ENCODE measurements at regions of chr17 and their contacts with region 1.

Region 1: GRCh38 chr17:19377602-19378392 is 501 bp upstream of the MAPK7 start:
- DNase-seq: peak; percentile 97 to 100
- H3K4me3 ChIP-seq: peak overlapping the region; percentile 79
- H3K27ac ChIP-seq: peak overlapping the region; percentile 79
- H3K4me1 ChIP-seq: peaks cover 19% of the 10 kb centered on the region
- H3K27me3 ChIP-seq: no peaks in the 10 kb centered on the region
- CTCF ChIP-seq: 0 out of 2 replicates have a peak, but pooled peaks have one; percentile 21

Region 2: DNA sequence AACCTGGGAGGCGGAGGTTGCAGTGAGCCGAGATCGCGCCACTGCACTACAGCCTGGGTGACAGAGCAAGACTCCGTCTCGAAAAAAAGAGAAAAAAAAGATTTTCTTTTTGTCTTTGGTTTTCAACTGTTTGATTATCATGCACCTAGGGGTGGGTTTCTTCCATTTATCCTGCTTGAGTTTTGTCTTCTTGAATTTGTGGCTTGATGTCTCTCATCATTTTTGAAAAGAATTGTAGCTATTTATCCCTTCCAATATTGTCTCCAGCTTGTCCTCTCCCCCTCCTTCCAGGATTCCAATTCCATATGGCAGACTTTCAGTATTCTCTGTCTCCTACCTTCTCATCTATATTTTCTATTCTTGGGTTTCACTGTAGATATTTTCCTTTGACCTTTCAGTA is 23.0 kb before region 1 on chr17:
- CTCF ChIA-PET with region 1: no interaction called
- POLR2A ChIA-PET with region 1: interaction called, 10 read pairs
- intact Hi-C with region 1: no loop called
- DNase-seq: no peak
- H3K4me3 ChIP-seq: no peak overlapping the region
- H3K27ac ChIP-seq: no peak overlapping the region
- H3K4me1 ChIP-seq: peaks cover 9% of the 10 kb centered on the region
- H3K27me3 ChIP-seq: no peaks in the 10 kb centered on the region
- CTCF ChIP-seq: no peak

Region 3: GRCh38 chr17:19492141-19492540 is 114.3 kb after region 1 on chr17:
- CTCF ChIA-PET with region 1: interaction called, 3 read pairs
- POLR2A ChIA-PET with region 1: interaction called, 11 read pairs
- intact Hi-C with region 1: no loop called
- DNase-seq: no peak
- H3K4me3 ChIP-seq: no peak overlapping the region
- H3K27ac ChIP-seq: no peak overlapping the region
- H3K4me1 ChIP-seq: no peaks in the 10 kb centered on the region
- H3K27me3 ChIP-seq: no peaks in the 10 kb centered on the region
- CTCF ChIP-seq: no peak

Region 4: DNA sequence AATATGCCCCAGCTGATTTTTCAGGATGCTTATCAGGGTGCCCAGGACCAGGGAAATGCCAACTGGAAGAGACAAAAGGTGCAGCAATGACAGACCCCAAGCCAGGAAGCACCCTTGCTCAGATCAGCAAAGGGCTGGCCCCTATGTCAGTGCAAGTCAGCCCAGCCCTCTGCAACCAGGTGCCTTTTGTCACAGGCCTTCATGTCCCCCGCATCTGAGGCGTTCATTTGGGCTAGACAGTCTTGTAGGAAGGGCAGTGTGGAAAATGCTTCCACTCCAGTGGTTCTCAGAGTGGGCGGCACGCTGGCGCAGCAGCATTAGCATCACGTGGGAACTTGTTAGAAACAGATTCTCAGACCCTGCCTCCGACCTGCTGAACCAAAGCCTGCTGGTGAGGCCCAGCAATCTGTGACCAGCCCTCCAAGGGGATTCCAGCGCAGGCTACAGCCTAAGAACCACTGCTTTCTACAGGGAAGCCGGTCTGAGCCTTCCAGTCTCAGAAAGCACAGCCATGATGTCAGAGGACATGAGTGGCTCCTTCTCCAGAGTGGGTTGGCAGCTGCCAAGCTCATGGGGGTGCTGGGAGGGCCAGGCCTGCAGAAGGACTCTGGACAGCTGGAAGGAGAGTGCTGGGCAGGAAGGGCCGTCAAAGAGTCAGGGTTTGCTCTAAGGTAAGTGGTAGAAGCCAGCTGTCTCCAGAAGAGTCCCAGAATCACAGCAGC is 325.5 kb after region 1 on chr17:
- CTCF ChIA-PET with region 1: no interaction called
- POLR2A ChIA-PET with region 1: interaction called, 18 read pairs
- intact Hi-C with region 1: no loop called
- DNase-seq: no peak
- H3K4me3 ChIP-seq: no peak overlapping the region
- H3K27ac ChIP-seq: no peak overlapping the region
- H3K4me1 ChIP-seq: peaks cover 13% of the 10 kb centered on the region; the same call in 1 of the 2 replicates
- H3K27me3 ChIP-seq: no peaks in the 10 kb centered on the region
- CTCF ChIP-seq: no peak